Sigmoid colon (tissue), 7 donors: ENCODE measurements at regions of chr1 and their contacts with region 1.

Region 1: GRCh38 chr1:235415008-235415904 is 48.0 kb downstream of the TBCE start:
- DNase-seq: peak; percentile 78
- H3K4me3 ChIP-seq: no peak overlapping the region
- H3K27ac ChIP-seq: no peak overlapping the region
- H3K4me1 ChIP-seq: peaks cover 0 to 11% (median 0%) of the 10 kb centered on the region in 4 donors
- H3K27me3 ChIP-seq: no peaks in the 10 kb centered on the region
- CTCF ChIP-seq: peak; percentile 37 to 76 (median 64)
- EP300 ChIP-seq: no peak
- POLR2A ChIP-seq: no peak

Region 2: GRCh38 chr1:235100194-235100772 is 315.0 kb before region 1 on chr1:
- intact Hi-C with region 1: loop called (anchors 5 kb)
- DNase-seq: no peak
- H3K4me3 ChIP-seq: no peak overlapping the region
- H3K27ac ChIP-seq: no peak overlapping the region
- H3K4me1 ChIP-seq: peaks cover 0 to 17% (median 8%) of the 10 kb centered on the region in 4 donors
- H3K27me3 ChIP-seq: no peaks in the 10 kb centered on the region
- CTCF ChIP-seq: no peak
- EP300 ChIP-seq: no peak
- POLR2A ChIP-seq: no peak

Region 3: DNA sequence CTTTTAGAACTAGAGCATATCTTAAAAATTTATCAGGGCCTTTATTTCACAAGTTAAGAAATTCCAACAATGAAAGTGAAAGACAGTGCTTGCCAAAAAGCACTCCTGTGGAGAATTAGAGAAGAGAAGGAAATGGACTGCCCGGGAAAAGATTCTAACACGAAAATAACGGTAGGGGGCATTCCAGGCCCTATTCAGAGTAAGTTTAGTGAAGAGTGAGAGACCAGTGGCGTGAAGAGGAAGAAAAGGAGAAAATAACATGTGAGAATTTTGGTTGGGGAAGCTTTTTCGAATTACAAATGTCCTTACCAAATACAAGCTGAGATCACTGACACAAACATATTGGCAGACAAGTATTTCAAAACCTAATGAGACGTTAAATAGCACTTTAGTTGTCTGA is 215.8 kb before region 1 on chr1:
- intact Hi-C with region 1: loop called (anchors 10 kb)
- DNase-seq: no peak
- H3K4me3 ChIP-seq: no peak overlapping the region
- H3K27ac ChIP-seq: no peak overlapping the region
- H3K4me1 ChIP-seq: peaks cover 0 to 14% (median 6%) of the 10 kb centered on the region in 4 donors
- H3K27me3 ChIP-seq: no peaks in the 10 kb centered on the region
- CTCF ChIP-seq: no peak
- EP300 ChIP-seq: no peak
- POLR2A ChIP-seq: no peak

Region 4: GRCh38 chr1:235253219-235253962 is 161.9 kb before region 1 on chr1:
- intact Hi-C with region 1: loop called (anchors 1 kb)
- DNase-seq: peak; percentile 80
- H3K4me3 ChIP-seq: no peak overlapping the region
- H3K27ac ChIP-seq: no peak overlapping the region
- H3K4me1 ChIP-seq: peaks cover 0 to 10% (median 0%) of the 10 kb centered on the region in 4 donors
- H3K27me3 ChIP-seq: no peaks in the 10 kb centered on the region
- CTCF ChIP-seq: peak; percentile 50 to 83 (median 72)
- EP300 ChIP-seq: no peak
- POLR2A ChIP-seq: no peak

Region 5: DNA sequence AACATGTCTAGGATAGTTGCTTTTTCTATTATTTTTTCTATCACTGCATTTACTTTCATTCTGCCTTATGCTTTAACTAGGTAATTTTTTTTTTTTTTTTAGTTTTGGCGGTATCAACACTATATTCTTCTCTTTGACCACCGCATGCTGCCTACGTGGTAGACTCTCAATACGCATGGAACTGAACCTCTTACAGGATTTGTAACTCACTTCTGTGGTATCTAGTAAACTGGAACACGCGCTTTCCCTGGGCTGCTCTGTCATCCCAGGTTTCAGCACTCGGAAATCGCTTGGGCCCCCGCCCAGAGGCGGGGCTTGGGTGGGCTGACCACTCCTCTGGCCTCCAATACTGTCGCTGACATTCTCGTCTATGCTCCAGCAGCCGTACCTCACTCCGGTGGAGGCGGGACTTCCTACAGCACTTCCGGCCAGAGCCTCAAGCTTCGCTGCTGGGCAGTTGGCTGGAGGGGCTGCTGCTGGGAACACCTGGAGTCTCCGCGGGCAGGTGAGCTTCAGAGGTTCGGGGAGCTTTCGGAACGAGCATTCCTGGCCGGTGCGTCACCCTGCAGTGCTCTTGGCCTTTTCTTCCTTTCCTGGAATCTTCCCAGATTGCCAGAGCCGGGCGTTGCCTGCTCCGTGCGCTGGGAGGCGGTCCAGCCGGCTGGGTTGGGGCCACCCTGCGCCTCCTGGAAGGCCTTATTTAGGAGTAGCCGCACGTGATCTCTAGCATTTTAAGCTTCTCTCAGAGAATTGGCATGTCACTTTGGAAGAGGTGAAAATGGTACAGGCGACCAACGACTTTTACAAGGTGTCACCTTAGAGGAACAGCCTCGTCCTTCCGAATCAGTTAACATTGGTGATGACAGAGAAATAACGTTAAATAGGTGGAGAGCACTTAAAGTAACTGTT is 48.0 kb before region 1 on chr1 and contains the start of gene TBCE:
- intact Hi-C with region 1: loop called (anchors 5 kb)
- DNase-seq: peak; percentile 98
- H3K4me3 ChIP-seq: peak within 1 kb of the TSS; percentile 60 to 75 (median 64)
- H3K27ac ChIP-seq: peak within 1 kb of the TSS; percentile 77 to 85 (median 81)
- H3K4me1 ChIP-seq: peaks cover 0 to 7% (median 6%) of the 10 kb centered on the region in 4 donors
- H3K27me3 ChIP-seq: no peaks in the 10 kb centered on the region
- CTCF ChIP-seq: no peak
- EP300 ChIP-seq: no peak
- POLR2A ChIP-seq: peak in 1 of 2 donors; percentile 77
- total RNA-seq, gene TBCE: 16.3 to 21.9 (median 17.7) TPM

Region 6: DNA sequence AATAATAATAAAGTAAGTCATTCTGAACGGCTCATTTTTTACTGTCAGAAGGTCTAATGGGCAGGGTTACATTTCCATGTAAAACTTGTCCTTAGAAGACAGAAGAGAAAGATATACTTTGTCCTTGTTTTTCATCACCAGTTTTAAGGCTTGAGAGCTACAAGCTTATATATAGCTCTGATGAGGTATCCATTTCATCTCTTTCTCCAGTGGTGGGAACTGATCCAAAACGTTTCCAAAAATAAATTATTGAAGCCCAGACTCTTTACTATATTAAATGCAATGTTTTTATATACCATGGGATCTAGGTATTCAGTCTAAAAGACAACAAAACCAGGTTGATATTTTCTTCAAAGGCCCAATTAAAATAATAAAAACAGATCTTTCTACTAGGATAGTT is 80.3 kb after region 1 on chr1:
- intact Hi-C with region 1: no loop called
- DNase-seq: no peak
- H3K4me3 ChIP-seq: no peak overlapping the region
- H3K27ac ChIP-seq: no peak overlapping the region
- H3K4me1 ChIP-seq: peaks cover 0 to 11% (median 7%) of the 10 kb centered on the region in 4 donors
- H3K27me3 ChIP-seq: no peaks in the 10 kb centered on the region
- CTCF ChIP-seq: no peak
- EP300 ChIP-seq: no peak
- POLR2A ChIP-seq: no peak